Vagina (tissue), 2 donors: ENCODE measurements at regions of chr2 and their contacts with region 1.

Region 1: GRCh38 chr2:47767880-47768609 is 14.9 kb upstream of the MSH6 start:
- DNase-seq: no peak
- H3K4me3 ChIP-seq: no peak overlapping the region
- H3K27ac ChIP-seq: no peak overlapping the region
- H3K4me1 ChIP-seq: no peaks in the 10 kb centered on the region
- H3K27me3 ChIP-seq: no peaks in the 10 kb centered on the region
- CTCF ChIP-seq: peak; percentile 92 to 98 (median 93)
- POLR2A ChIP-seq: no peak

Region 2: GRCh38 chr2:47558768-47559684 is 209.0 kb before region 1 on chr2:
- intact Hi-C with region 1: no loop called
- DNase-seq: no peak
- H3K4me3 ChIP-seq: no peak overlapping the region
- H3K27ac ChIP-seq: peak overlapping the region; percentile 13
- H3K4me1 ChIP-seq: no peaks in the 10 kb centered on the region
- H3K27me3 ChIP-seq: no peaks in the 10 kb centered on the region
- CTCF ChIP-seq: no peak
- POLR2A ChIP-seq: no peak

Region 3: GRCh38 chr2:47592381-47592780 is 175.7 kb before region 1 on chr2:
- intact Hi-C with region 1: no loop called
- DNase-seq: no peak
- H3K4me3 ChIP-seq: no peak overlapping the region
- H3K27ac ChIP-seq: no peak overlapping the region
- H3K4me1 ChIP-seq: no peaks in the 10 kb centered on the region
- H3K27me3 ChIP-seq: no peaks in the 10 kb centered on the region
- CTCF ChIP-seq: no peak
- POLR2A ChIP-seq: no peak

Region 4: DNA sequence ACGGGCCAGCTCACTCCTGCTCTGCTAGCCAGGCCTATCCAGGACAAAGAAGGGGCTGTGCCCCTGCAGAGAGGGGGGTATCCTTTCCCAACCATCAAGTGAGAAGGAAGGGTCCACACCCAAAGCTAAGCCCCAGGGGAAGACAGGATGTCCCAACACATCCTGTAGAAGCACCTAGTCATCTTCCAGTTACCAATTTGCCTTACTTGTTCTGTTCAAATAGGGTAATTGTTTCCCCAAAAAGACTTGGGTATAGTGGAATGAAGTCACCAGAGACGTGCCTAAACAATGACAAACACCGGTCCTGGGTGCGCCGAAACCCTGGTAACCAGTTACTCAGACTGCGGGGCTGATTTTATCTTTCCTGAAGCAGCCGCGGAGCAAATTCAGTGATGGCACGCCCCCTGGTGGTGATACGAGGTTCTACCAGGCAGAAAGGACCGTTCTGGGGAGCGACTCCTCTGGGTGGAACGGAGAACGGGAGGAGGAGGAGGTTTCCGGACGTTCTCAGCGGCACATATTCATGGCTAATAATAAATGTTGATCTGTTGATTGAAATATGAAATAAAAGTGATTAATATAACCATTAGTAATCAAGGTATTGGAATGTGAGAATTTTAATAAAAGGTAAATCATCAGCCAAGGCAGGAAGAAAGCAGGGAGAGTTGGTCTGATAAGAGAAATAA is 652.6 kb after region 1 on chr2:
- intact Hi-C with region 1: loop called (anchors 10 kb)
- DNase-seq: no peak
- H3K4me3 ChIP-seq: no peak overlapping the region
- H3K27ac ChIP-seq: peak overlapping the region; percentile 29
- H3K4me1 ChIP-seq: peaks cover 9% of the 10 kb centered on the region
- H3K27me3 ChIP-seq: no peaks in the 10 kb centered on the region
- CTCF ChIP-seq: peak; percentile 95 to 98 (median 98)
- POLR2A ChIP-seq: no peak